Naive thymus-derived CD4-positive, alpha-beta T cell (primary cell): ENCODE measurements at regions of chr6 and their contacts with region 1.

Region 1: GRCh38 chr6:148464319-148465010 is 121.8 kb downstream of the SASH1 start:
- DNase-seq: peak; percentile 6 to 53 (median 23)
- ATAC-seq: peak; percentile 58
- H3K4me3 ChIP-seq: no peak overlapping the region
- H3K4me3 Mint-ChIP-seq: no peak overlapping the region
- H3K27ac ChIP-seq: no peak overlapping the region
- H3K27ac Mint-ChIP-seq: no peak overlapping the region
- H3K4me1 ChIP-seq: no peaks in the 10 kb centered on the region
- H3K4me1 Mint-ChIP-seq: peaks cover 0 to 5% (median 4%) of the 10 kb centered on the region in 7 donors
- H3K27me3 ChIP-seq: no peaks in the 10 kb centered on the region
- H3K27me3 Mint-ChIP-seq: peaks cover 5 to 51% (median 13%) of the 10 kb centered on the region in 5 donors

Region 2: DNA sequence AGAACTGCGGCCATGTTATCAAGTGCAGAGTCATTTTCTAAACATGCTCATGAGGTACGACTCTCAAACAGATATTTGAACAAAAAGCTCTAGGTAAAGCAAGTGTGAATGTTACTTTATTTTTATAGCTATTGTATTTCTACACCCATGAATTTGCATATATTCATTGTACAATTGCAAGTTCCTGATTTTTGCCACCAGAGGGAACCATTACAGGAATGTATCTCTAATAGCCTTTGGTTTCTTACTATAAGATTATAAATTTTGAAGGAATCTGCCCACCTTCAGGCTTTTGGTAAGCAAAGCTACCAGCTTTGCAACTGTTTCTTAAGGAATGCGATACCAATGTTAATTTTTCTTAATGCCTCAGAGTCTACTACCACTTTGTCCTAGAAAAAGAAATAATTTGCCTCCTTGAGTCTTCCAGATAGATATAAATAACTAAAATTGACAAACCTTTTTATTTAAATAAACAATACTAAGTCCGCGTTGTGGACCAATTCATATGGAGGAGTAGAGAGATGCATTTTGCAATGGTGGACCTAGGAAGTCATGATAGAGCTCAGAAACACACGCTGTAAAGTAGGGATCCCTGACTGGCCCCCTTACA is 1081.4 kb before region 1 on chr6:
- CTCF ChIA-PET with region 1: no interaction called
- POLR2A ChIA-PET with region 1: no interaction called
- intact Hi-C with region 1: loop called in 1 of 2 experiments (anchors 10 kb)
- DNase-seq: peak in 1 of 9 donors; percentile 5
- ATAC-seq: no peak
- H3K4me3 ChIP-seq: no peak overlapping the region
- H3K4me3 Mint-ChIP-seq: no peak overlapping the region
- H3K27ac ChIP-seq: no peak overlapping the region
- H3K27ac Mint-ChIP-seq: peak overlapping the region in 1 of 9 donors; percentile 59
- H3K4me1 ChIP-seq: no peaks in the 10 kb centered on the region
- H3K4me1 Mint-ChIP-seq: peaks cover 0 to 5% (median 0%) of the 10 kb centered on the region in 7 donors
- H3K27me3 ChIP-seq: no peaks in the 10 kb centered on the region
- H3K27me3 Mint-ChIP-seq: no peaks in the 10 kb centered on the region

Region 3: GRCh38 chr6:147506704-147507114 is 957.8 kb before region 1 on chr6:
- CTCF ChIA-PET with region 1: no interaction called
- POLR2A ChIA-PET with region 1: no interaction called
- intact Hi-C with region 1: loop called in 1 of 2 experiments (anchors 5 kb)
- DNase-seq: peak in 1 of 9 donors; percentile 58
- ATAC-seq: no peak
- H3K4me3 ChIP-seq: no peak overlapping the region
- H3K4me3 Mint-ChIP-seq: peak overlapping the region in 9 of 10 donors; percentile 50 to 80 (median 52)
- H3K27ac ChIP-seq: no peak overlapping the region
- H3K27ac Mint-ChIP-seq: no peak overlapping the region
- H3K4me1 ChIP-seq: peaks cover 0 to 7% of the 10 kb centered on the region in 2 donors
- H3K4me1 Mint-ChIP-seq: peaks cover 6 to 23% (median 21%) of the 10 kb centered on the region in 7 donors
- H3K27me3 ChIP-seq: peaks cover 3 to 5% of the 10 kb centered on the region in 2 donors
- H3K27me3 Mint-ChIP-seq: peaks cover 60 to 74% (median 67%) of the 10 kb centered on the region in 5 donors

Region 4: GRCh38 chr6:148144917-148145521 is 319.4 kb before region 1 on chr6:
- CTCF ChIA-PET with region 1: no interaction called
- POLR2A ChIA-PET with region 1: no interaction called
- intact Hi-C with region 1: loop called (anchors 1 kb)
- DNase-seq: peak in 6 of 9 donors; percentile 4 to 52 (median 10)
- ATAC-seq: no peak
- H3K4me3 ChIP-seq: no peak overlapping the region
- H3K4me3 Mint-ChIP-seq: no peak overlapping the region
- H3K27ac ChIP-seq: no peak overlapping the region
- H3K27ac Mint-ChIP-seq: no peak overlapping the region
- H3K4me1 ChIP-seq: no peaks in the 10 kb centered on the region
- H3K4me1 Mint-ChIP-seq: peaks cover 0 to 8% (median 8%) of the 10 kb centered on the region in 7 donors
- H3K27me3 ChIP-seq: no peaks in the 10 kb centered on the region
- H3K27me3 Mint-ChIP-seq: peaks cover 4 to 13% (median 9%) of the 10 kb centered on the region in 5 donors

Region 5: DNA sequence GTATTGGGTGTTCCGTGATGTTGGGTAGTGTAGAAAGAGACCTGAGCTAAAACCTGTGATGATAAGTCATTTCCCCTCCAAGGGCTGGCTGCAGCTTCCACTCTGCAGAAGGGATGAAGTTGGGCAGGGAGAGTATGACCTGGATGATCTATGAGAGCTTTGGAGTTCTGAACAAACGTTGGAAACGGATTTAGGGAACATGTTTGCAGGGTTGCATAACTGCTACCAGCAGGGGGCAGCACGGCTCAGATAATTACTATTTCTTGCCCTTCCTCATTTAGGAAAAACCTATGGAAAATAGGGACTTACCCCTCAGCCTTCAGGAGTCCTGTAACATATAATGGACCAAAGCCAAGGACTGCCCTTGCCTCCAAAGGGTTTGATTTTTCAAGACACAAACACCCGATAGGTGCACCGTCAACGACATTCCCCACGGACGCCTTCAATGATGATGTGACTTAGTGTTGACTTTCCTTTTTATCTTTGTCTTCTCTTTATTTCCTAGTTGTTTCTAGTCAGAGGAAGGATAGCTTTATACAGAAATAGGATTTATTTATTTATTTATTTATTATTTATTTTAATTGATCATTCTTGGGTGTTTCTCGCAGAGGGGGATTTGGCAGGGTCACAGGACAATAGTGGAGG is 286.8 kb before region 1 on chr6:
- CTCF ChIA-PET with region 1: no interaction called
- POLR2A ChIA-PET with region 1: no interaction called
- intact Hi-C with region 1: loop called (anchors 1 kb)
- DNase-seq: peak in 2 of 9 donors; percentile 5 to 25
- ATAC-seq: no peak
- H3K4me3 ChIP-seq: no peak overlapping the region
- H3K4me3 Mint-ChIP-seq: no peak overlapping the region
- H3K27ac ChIP-seq: no peak overlapping the region
- H3K27ac Mint-ChIP-seq: no peak overlapping the region
- H3K4me1 ChIP-seq: no peaks in the 10 kb centered on the region
- H3K4me1 Mint-ChIP-seq: no peaks in the 10 kb centered on the region
- H3K27me3 ChIP-seq: no peaks in the 10 kb centered on the region
- H3K27me3 Mint-ChIP-seq: peaks cover 15 to 36% (median 22%) of the 10 kb centered on the region in 5 donors